Prostate gland (tissue), 2 donors: ENCODE measurements at regions of chr4 and their contacts with region 1.

Region 1: GRCh38 chr4:155667568-155668511 is 1.2 kb downstream of the GUCY1A1 start:
- DNase-seq: peak; percentile 48
- H3K4me3 ChIP-seq: peak overlapping the region; percentile 65 to 72
- H3K27ac ChIP-seq: peak overlapping the region; percentile 94 to 97
- H3K4me1 ChIP-seq: no peaks in the 10 kb centered on the region
- H3K27me3 ChIP-seq: no peaks in the 10 kb centered on the region
- CTCF ChIP-seq: no peak
- POLR2A ChIP-seq: no peak

Region 2: GRCh38 chr4:155529272-155529671 is 138.6 kb before region 1 on chr4:
- intact Hi-C with region 1: loop called (anchors 10 kb)
- DNase-seq: no peak
- H3K4me3 ChIP-seq: no peak overlapping the region
- H3K27ac ChIP-seq: no peak overlapping the region
- H3K4me1 ChIP-seq: no peaks in the 10 kb centered on the region
- H3K27me3 ChIP-seq: no peaks in the 10 kb centered on the region
- CTCF ChIP-seq: no peak
- POLR2A ChIP-seq: no peak

Region 3: GRCh38 chr4:155759405-155760252 is 91.8 kb after region 1 on chr4:
- intact Hi-C with region 1: loop called (anchors 5 kb)
- DNase-seq: no peak
- H3K4me3 ChIP-seq: peak overlapping the region; percentile 61 to 63
- H3K27ac ChIP-seq: peak overlapping the region; percentile 79 to 85
- H3K4me1 ChIP-seq: no peaks in the 10 kb centered on the region
- H3K27me3 ChIP-seq: no peaks in the 10 kb centered on the region
- CTCF ChIP-seq: peak in 1 of 4 experiments; percentile 22
- POLR2A ChIP-seq: no peak